Ovary (tissue), 10 donors: ENCODE measurements at regions of chr14 and their contacts with region 1.

Region 1: GRCh38 chr14:91164685-91165084 is 50.8 kb downstream of the DGLUCY start:
- DNase-seq: no peak
- H3K4me3 ChIP-seq: no peak overlapping the region
- H3K27ac ChIP-seq: no peak overlapping the region
- H3K4me1 ChIP-seq: no peaks in the 10 kb centered on the region
- H3K27me3 ChIP-seq: no peaks in the 10 kb centered on the region
- CTCF ChIP-seq: no peak
- EP300 ChIP-seq: no peak
- POLR2A ChIP-seq: no peak

Region 2: DNA sequence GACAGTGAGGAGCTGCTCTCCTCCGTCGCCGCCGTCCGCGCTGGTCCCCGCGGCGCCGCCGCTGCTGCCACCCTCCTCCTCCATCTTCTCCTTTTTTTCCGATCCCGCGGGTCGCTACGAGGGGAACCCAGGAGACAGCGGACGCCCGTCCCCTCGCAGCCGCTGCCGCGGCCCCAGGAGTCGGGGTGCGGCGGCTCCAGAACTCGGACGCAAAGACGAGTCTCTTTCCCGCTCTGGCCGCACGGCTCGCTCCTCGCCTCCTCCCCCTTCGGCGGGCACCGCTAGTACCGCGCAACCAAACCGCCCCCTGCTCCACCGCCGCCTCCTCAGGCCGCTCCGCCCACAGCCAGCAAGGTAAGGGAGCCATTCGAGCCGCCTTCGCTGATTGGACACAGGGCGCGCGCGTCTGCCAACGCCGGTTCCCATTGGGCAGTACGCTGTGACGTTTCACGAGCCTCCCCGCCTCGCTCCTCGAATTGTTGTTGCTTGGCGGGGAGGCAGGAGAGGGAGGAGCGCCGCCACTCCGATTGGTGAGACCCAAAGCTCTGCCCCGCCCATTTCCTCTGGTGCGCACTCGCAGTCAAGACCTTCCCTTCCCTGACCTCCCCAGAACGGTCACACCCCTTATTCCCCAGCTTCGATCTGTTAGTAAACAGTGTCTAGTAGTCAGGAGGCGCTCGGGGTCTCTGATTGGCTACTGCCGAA is 104.2 kb before region 1 on chr14 and contains the start of gene RPS6KA5:
- intact Hi-C with region 1: loop called in 1 of 4 experiments (anchors 10 kb)
- DNase-seq: peak; percentile 100
- H3K4me3 ChIP-seq: peak within 1 kb of the TSS; percentile 95
- H3K27ac ChIP-seq: peak within 1 kb of the TSS; percentile 98
- H3K4me1 ChIP-seq: peaks cover 1% of the 10 kb centered on the region
- H3K27me3 ChIP-seq: no peaks in the 10 kb centered on the region
- CTCF ChIP-seq: peak; percentile 17 to 64 (median 47)
- EP300 ChIP-seq: no peak
- POLR2A ChIP-seq: peak; percentile 95
- total RNA-seq, gene RPS6KA5: 6.7 to 19.0 (median 10.3) TPM

Region 3: DNA sequence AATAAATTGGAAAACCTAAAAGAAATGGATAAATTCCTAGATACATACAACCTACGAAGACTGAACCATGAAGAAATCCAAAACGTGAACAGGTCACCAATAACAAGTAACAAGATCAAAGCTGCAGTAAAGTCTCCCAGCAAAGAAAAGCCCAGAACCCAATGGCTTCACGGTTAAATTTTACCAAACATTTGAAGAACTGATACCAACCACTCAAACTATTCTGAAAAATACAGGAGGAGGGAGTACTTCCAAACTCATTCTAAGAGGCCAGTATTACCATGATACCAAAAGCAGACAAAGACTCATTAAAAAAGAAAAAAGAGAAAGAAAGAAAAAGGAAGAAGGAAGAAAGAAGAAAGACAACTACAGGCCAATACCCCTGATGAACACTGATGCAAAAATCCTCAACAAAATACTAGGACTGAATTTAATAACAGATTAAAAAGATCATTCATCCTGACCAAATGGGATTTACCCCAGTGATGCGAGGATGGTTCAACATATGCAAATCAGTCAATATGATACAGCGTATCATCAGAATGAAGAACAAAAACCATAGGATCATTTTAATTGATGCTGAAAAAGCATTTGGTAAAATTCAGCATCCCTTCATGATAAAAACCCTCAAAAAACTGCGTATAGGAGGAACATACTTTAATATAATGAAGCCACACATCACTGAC is 279.8 kb after region 1 on chr14:
- intact Hi-C with region 1: no loop called
- DNase-seq: no peak
- H3K4me3 ChIP-seq: no peak overlapping the region
- H3K27ac ChIP-seq: no peak overlapping the region
- H3K4me1 ChIP-seq: no peaks in the 10 kb centered on the region
- H3K27me3 ChIP-seq: no peaks in the 10 kb centered on the region
- CTCF ChIP-seq: no peak
- EP300 ChIP-seq: no peak
- POLR2A ChIP-seq: no peak